Heart left ventricle (tissue), 16 donors: ENCODE measurements at regions of chr11 and their contacts with region 1.

Region 1: DNA sequence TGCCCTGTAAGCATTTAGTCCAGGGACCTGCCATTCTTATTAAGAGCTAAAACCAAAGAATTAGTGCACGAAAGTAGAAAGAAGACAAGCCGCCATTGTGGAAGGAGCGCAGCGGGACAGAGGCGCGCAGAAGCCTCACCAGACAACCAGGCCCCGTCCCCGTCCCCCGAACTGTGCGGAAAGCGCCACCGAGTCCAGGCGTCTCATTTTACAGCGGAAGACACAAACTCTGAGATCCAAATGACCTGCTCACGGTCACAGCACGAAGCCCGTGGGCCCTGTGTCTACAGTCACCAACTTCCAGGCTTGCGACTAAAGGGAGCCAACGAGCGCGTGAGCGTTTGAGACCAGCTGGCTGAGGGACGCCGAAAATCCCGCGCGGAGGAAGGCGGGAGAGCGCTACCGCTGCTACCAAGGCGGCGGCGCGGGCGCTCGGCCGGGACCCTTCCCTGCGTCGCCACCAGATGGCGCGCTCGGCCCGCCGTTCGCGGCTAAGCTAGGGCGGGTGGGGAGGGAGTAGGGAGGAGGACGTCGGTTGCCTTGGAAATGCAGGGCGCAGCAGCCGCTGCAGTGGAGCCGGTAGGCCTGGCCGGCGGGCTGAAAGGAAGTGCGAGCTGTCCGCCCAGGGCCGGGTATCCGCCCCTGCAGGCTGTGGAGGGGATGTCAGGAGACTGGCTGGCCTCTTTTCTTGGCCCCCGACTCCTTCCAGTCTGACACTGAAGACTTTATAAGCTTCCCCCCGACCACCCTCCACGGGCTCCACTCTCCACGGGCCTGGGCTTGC is 434 bp upstream of the CCDC83 start:
- DNase-seq: peak; percentile 91 to 96 (median 94)
- ATAC-seq: peak; percentile 98 to 99 (median 98)
- H3K4me3 ChIP-seq: peak overlapping the region; percentile 27 to 68 (median 60)
- H3K27ac ChIP-seq: peak overlapping the region; percentile 67 to 91 (median 82)
- H3K4me1 ChIP-seq: peaks cover 0 to 16% (median 7%) of the 10 kb centered on the region in 12 donors
- H3K27me3 ChIP-seq: no peaks in the 10 kb centered on the region
- CTCF ChIP-seq: peak; percentile 90 to 99 (median 95)
- POLR2A ChIP-seq: no peak

Region 2: DNA sequence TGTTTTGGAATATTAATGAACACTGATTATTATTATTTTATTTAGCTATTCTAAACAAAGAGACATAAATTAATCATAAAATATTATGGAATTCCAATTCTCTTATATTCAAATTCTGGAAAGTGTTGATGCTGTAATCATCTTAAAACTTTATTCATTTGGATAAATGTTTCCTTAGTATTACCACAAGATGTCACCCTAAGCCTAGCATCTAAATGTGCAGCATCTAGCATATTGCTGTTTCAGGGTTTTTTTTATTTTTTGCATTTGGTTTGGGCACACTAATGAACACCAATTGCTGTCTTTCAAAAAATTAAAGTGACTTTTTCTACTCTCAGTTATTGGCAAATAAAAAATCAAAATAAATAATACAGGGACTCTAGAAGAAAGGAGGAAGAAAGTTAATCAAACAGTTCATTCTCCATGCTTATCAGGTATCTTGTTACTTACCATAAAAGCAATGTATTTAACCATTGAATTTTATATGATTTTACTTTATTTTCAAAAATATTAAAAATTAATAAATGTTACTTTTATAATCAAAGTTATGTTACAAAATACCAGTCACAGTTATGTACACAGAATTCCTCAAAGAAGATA is 259.4 kb before region 1 on chr11:
- intact Hi-C with region 1: loop called in 1 of 10 experiments (anchors 10 kb)
- DNase-seq: no peak
- ATAC-seq: peak in 1 of 4 donors; percentile 57
- H3K4me3 ChIP-seq: no peak overlapping the region
- H3K27ac ChIP-seq: no peak overlapping the region
- H3K4me1 ChIP-seq: no peaks in the 10 kb centered on the region
- H3K27me3 ChIP-seq: no peaks in the 10 kb centered on the region
- CTCF ChIP-seq: peak; percentile 43 to 78 (median 63)
- POLR2A ChIP-seq: no peak

Region 3: GRCh38 chr11:85913513-85913912 is 58.8 kb after region 1 on chr11:
- intact Hi-C with region 1: no loop called
- DNase-seq: no peak
- ATAC-seq: peak in 1 of 4 donors; percentile 15
- H3K4me3 ChIP-seq: no peak overlapping the region
- H3K27ac ChIP-seq: no peak overlapping the region
- H3K4me1 ChIP-seq: no peaks in the 10 kb centered on the region
- H3K27me3 ChIP-seq: no peaks in the 10 kb centered on the region
- CTCF ChIP-seq: no peak
- POLR2A ChIP-seq: no peak

Region 4: GRCh38 chr11:86041975-86042378 is 187.2 kb after region 1 on chr11:
- intact Hi-C with region 1: loop called in 1 of 10 experiments (anchors 10 kb)
- DNase-seq: peak in 3 of 5 donors; percentile 32 to 79 (median 78)
- ATAC-seq: peak; percentile 80 to 91 (median 84)
- H3K4me3 ChIP-seq: peak overlapping the region in 8 of 12 donors; percentile 16 to 46 (median 26)
- H3K27ac ChIP-seq: peak overlapping the region in 10 of 12 donors; percentile 13 to 75 (median 58)
- H3K4me1 ChIP-seq: peaks cover 0 to 81% (median 57%) of the 10 kb centered on the region in 12 donors
- H3K27me3 ChIP-seq: no peaks in the 10 kb centered on the region
- CTCF ChIP-seq: peak; percentile 82 to 94 (median 89)
- POLR2A ChIP-seq: no peak

Region 5: GRCh38 chr11:86218125-86219084 is 363.7 kb after region 1 on chr11:
- intact Hi-C with region 1: loop called in 9 of 10 experiments (anchors 2 to 10 kb)
- DNase-seq: peak; percentile 55 to 68 (median 65)
- ATAC-seq: peak; percentile 74 to 95 (median 92)
- H3K4me3 ChIP-seq: peak overlapping the region in 10 of 12 donors; percentile 22 to 53 (median 38)
- H3K27ac ChIP-seq: peak overlapping the region in 1 of 12 donors; percentile 15
- H3K4me1 ChIP-seq: peaks cover 0 to 19% (median 4%) of the 10 kb centered on the region in 12 donors
- H3K27me3 ChIP-seq: no peaks in the 10 kb centered on the region
- CTCF ChIP-seq: peak; percentile 85 to 95 (median 93)
- POLR2A ChIP-seq: no peak

Region 6: GRCh38 chr11:86291466-86292262 is 436.9 kb after region 1 on chr11:
- intact Hi-C with region 1: loop called in 7 of 10 experiments (anchors 5 to 10 kb)
- DNase-seq: peak in 2 of 5 donors; percentile 12 to 33
- ATAC-seq: peak in 1 of 4 donors; percentile 34
- H3K4me3 ChIP-seq: no peak overlapping the region
- H3K27ac ChIP-seq: no peak overlapping the region
- H3K4me1 ChIP-seq: peaks cover 0 to 9% (median 0%) of the 10 kb centered on the region in 12 donors
- H3K27me3 ChIP-seq: no peaks in the 10 kb centered on the region
- CTCF ChIP-seq: peak; percentile 36 to 68 (median 54)
- POLR2A ChIP-seq: no peak